ENCODE measurements at regions of chr6 and their contacts with region 1.

Region 1: DNA sequence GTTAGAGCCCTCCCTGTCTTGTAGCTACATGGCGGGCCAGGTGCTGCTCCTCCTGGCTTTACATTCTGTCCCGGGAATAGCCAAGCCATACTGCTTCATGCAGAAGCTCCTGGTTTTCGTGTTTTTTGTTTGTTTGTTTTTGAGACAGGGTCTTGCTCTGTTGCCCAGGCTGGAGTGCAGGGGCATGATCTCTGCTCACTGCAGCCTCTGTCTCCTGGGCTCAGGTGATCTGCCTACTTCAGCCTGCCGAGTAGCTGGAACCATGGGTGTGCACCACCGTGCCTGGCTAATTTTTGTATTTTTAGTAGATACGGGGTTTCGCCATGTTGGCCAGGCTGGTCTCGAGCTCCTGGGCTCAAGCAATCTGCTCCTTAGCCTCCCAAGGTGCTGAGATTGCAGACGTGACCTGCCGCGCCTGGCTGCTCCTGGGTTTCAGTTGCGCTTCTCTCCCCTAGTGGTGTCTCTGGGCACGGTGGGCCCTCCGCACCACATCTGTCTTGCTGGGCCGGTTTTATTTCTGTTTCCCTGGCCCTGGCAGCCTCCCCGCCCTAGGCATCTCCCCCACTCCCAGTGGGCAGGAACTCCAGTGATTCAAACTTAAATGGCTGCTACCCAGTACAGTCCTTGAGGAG is 12.9 kb downstream of the CDYL start:
- DNase-seq: peak in 1 of 2 experiments; percentile 57
- H3K4me3 ChIP-seq: no peak overlapping the region
- H3K27ac ChIP-seq: no peak overlapping the region
- H3K4me1 ChIP-seq: peaks cover 9 to 33% (median 24%) of the 10 kb centered on the region in 4 experiments
- H3K27me3 ChIP-seq: no peaks in the 10 kb centered on the region; a peak in 2 of 7 replicates
- CTCF ChIP-seq: peak; percentile 43 to 67 (median 55)
- EP300 ChIP-seq: no peak
- POLR2A ChIP-seq: no peak
- RAD21 ChIP-seq: peak; percentile 24 to 40; a peak in 3 of 4 replicates

Region 2: DNA sequence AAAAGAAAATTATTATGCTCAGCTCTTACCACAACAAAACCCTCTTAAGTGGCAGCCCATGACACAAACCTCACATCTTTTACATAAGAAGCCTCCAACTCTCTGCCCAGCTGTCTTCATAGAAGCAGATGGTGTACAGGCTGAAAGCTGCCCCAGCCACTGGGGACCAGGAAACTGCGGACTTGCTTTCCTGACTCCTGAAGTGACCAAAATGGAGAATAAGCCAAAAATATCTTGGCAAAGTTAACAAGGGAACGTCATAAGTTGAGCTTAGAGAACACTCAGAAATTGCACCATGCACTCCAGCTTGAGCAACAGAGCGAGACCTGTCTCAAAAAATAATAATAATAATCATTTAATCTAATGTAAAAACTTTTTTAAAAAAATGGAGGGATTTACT is 173.2 kb before region 1 on chr6:
- CTCF ChIA-PET with region 1: no interaction called
- POLR2A ChIA-PET with region 1: no interaction called
- DNase-seq: no peak
- H3K4me3 ChIP-seq: no peak overlapping the region
- H3K27ac ChIP-seq: no peak overlapping the region
- H3K4me1 ChIP-seq: no peaks in the 10 kb centered on the region
- H3K27me3 ChIP-seq: no peaks in the 10 kb centered on the region
- CTCF ChIP-seq: no peak
- EP300 ChIP-seq: no peak
- POLR2A ChIP-seq: no peak
- RAD21 ChIP-seq: no peak

Region 3: DNA sequence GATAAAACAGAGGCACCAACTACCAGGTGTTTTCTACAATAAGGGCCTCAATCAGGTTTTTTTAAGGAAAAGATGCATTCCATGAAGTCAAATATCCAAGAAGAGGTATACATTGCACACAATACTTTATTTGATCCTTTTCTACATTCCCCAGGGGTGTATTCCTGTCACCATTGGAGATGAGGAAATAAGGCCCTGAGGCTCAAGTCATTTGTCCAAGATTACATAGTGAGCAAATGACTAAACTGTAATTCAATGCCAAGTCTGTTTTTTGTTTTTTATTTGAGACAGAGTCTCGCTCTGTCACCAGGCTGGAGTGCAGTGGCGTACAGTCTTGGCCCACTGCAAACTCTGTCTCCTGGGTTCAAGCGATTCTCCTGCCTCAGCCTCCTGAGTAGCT is 82.1 kb before region 1 on chr6:
- CTCF ChIA-PET with region 1: no interaction called
- POLR2A ChIA-PET with region 1: no interaction called
- DNase-seq: no peak
- H3K4me3 ChIP-seq: no peak overlapping the region
- H3K27ac ChIP-seq: no peak overlapping the region
- H3K4me1 ChIP-seq: no peaks in the 10 kb centered on the region
- H3K27me3 ChIP-seq: no peaks in the 10 kb centered on the region
- CTCF ChIP-seq: no peak
- EP300 ChIP-seq: no peak
- POLR2A ChIP-seq: no peak
- RAD21 ChIP-seq: no peak

Region 4: DNA sequence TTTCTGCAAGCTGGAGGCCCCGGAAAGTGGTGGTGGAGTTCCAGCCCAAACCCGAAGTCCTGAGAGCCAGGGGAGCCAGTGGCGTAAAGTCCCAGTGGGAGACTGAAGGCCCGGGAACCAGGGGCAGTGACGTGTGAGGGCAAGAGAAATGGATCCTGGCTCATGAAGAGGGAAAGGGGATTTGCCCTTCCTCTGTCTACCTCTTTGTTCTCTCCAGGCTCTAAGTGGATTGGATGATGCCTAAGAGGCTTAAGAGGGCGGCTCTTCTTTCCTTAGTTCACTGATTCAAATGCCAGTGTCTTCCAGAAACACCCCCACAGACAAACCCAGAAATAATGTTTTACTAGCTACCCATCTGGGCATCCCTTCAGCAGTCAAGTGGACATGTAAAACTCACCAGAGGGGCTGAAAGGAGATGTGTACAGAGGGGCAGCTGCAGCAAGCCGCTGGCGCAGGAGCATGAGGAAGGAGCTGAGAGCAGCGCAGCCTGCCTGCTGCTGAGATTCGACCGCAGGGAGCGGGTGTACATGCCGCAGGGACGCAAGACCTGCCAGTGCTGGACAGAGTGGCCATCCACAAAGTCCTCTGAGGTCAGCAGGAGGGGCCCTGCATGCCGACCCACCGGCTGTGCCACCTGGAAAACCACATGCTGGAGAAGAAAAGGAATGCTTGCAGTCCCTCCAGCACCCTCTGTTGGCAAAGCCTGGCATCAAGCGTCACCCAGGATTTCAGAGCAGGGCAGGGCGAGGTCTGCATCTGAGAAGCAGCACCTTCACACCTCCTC is 16.7 kb after region 1 on chr6:
- CTCF ChIA-PET with region 1: interaction called, 45 read pairs
- POLR2A ChIA-PET with region 1: interaction called, 3 read pairs
- DNase-seq: peak in 1 of 2 experiments; percentile 80
- H3K4me3 ChIP-seq: no peak overlapping the region; a peak in 2 of 8 replicates
- H3K27ac ChIP-seq: no peak overlapping the region
- H3K4me1 ChIP-seq: peaks cover 5 to 19% (median 11%) of the 10 kb centered on the region in 4 experiments
- H3K27me3 ChIP-seq: no peaks in the 10 kb centered on the region
- CTCF ChIP-seq: peak; percentile 68 to 91 (median 80)
- EP300 ChIP-seq: no peak
- POLR2A ChIP-seq: no peak
- RAD21 ChIP-seq: peak; percentile 72 to 76

Region 5: DNA sequence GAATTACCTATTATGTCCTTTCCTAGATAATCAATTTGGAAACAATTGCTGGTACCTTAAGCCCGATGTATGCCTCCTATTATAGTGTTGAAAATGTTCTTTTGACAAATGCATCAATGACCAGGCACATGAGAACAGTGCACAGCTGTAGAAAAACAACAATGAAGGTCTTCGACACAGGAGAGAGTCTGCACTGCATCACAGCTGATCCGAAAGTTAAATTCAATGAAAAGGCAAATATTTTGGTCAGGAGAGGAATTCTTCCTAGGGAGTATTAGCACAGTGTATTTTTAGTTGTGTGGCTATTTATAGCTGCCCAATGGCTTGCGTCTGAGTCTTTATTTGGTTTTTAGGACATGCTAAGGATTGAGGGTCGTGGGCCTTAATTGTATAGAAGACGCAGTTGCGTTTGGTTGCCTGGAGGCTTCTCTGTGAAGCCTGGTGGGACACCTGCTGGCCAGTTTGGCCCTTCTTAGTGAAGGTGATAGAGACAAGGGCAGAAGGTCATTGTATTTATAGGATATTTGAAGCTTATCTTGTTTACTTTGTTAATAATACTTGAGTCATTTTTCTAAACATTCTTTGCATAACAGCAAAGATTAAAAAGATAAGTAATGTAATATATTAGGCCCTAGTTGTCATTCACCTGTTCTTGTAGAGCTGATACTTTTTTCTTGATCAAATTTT is 59.5 kb after region 1 on chr6:
- CTCF ChIA-PET with region 1: interaction called, 20 read pairs
- POLR2A ChIA-PET with region 1: no interaction called
- DNase-seq: no peak
- H3K4me3 ChIP-seq: no peak overlapping the region
- H3K27ac ChIP-seq: no peak overlapping the region
- H3K4me1 ChIP-seq: peaks cover 0 to 11% (median 2%) of the 10 kb centered on the region in 4 experiments; a peak in 2 of 7 replicates
- H3K27me3 ChIP-seq: no peaks in the 10 kb centered on the region
- CTCF ChIP-seq: peak; percentile 46 to 66 (median 61)
- EP300 ChIP-seq: no peak
- POLR2A ChIP-seq: no peak
- RAD21 ChIP-seq: peak; percentile 67 to 70